ENCODE measurements at regions of chr3 and their contacts with region 1.

Region 1: GRCh38 chr3:156691920-156692319 is 17.5 kb downstream of the TIPARP start:
- DNase-seq: no peak
- ATAC-seq: no peak
- H3K4me3 ChIP-seq: peak overlapping the region in 3 of 12 donors; percentile 12 to 18 (median 14)
- H3K27ac ChIP-seq: peak overlapping the region in 3 of 12 donors; percentile 4 to 56 (median 4)
- H3K4me1 ChIP-seq: peaks cover 0 to 71% (median 44%) of the 10 kb centered on the region in 12 donors
- H3K27me3 ChIP-seq: no peaks in the 10 kb centered on the region
- CTCF ChIP-seq: no peak
- POLR2A ChIP-seq: no peak

Region 2: GRCh38 chr3:156808025-156808424 is 116.1 kb after region 1 on chr3:
- intact Hi-C with region 1: loop called in 1 of 10 experiments (anchors 10 kb)
- DNase-seq: no peak
- ATAC-seq: no peak
- H3K4me3 ChIP-seq: no peak overlapping the region
- H3K27ac ChIP-seq: no peak overlapping the region
- H3K4me1 ChIP-seq: peaks cover 0 to 18% (median 2%) of the 10 kb centered on the region in 12 donors
- H3K27me3 ChIP-seq: no peaks in the 10 kb centered on the region
- CTCF ChIP-seq: no peak
- POLR2A ChIP-seq: no peak

Region 3: GRCh38 chr3:156978481-156978961 is 286.6 kb after region 1 on chr3:
- intact Hi-C with region 1: no loop called
- DNase-seq: no peak
- ATAC-seq: no peak
- H3K4me3 ChIP-seq: no peak overlapping the region
- H3K27ac ChIP-seq: no peak overlapping the region
- H3K4me1 ChIP-seq: no peaks in the 10 kb centered on the region
- H3K27me3 ChIP-seq: no peaks in the 10 kb centered on the region
- CTCF ChIP-seq: no peak
- POLR2A ChIP-seq: no peak

Measured in heart left ventricle (tissue), 16 donors.